Sciatic nerve (tissue), 2 donors: ENCODE measurements at regions of chr13 and their contacts with region 1.

Region 1: DNA sequence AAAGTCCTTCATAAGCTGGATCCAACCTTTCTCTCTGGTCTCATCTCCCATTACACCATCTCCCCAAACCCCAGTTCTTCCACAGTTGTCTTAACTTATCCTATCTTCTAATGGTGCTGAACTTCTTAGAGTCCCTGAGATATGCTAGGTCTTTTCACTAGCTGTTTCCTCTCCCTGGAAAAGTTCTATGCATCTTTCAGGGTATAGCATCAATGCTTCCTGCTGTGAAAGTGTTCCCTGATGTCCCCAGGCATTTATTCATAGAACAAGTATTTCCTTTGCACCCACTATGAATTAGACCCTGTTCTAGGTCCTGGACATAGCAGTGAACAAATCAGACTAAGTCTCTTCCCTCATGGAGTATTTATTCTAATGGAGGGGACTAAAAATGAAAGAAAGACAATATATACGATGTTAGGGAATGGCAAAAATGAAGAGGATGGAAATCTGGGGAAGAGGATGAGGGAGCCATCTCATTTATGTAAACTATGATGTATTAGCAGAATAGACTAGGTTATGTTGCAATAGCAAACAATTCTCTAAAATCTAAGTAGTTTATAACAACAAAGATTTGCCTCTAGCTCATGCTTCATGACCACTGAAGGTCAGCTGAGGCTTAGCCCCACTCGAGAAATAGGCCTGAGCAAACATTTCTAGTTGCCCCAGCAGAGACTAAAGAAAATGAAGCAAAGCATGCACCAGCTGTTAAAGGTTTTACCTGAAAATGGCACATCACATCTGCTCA is 120.0 kb downstream of the CYSLTR2 start:
- DNase-seq: no peak
- ATAC-seq: no peak

Region 2: GRCh38 chr13:48818495-48819031 is 44.9 kb after region 1 on chr13:
- intact Hi-C with region 1: no loop called
- DNase-seq: no peak
- ATAC-seq: no peak

Region 3: GRCh38 chr13:48923376-48923775 is 149.7 kb after region 1 on chr13:
- intact Hi-C with region 1: loop called (anchors 5 kb)
- DNase-seq: no peak
- ATAC-seq: no peak